CD14-positive monocyte (primary cell): ENCODE measurements at regions of chr1 and their contacts with region 1.

Region 1: DNA sequence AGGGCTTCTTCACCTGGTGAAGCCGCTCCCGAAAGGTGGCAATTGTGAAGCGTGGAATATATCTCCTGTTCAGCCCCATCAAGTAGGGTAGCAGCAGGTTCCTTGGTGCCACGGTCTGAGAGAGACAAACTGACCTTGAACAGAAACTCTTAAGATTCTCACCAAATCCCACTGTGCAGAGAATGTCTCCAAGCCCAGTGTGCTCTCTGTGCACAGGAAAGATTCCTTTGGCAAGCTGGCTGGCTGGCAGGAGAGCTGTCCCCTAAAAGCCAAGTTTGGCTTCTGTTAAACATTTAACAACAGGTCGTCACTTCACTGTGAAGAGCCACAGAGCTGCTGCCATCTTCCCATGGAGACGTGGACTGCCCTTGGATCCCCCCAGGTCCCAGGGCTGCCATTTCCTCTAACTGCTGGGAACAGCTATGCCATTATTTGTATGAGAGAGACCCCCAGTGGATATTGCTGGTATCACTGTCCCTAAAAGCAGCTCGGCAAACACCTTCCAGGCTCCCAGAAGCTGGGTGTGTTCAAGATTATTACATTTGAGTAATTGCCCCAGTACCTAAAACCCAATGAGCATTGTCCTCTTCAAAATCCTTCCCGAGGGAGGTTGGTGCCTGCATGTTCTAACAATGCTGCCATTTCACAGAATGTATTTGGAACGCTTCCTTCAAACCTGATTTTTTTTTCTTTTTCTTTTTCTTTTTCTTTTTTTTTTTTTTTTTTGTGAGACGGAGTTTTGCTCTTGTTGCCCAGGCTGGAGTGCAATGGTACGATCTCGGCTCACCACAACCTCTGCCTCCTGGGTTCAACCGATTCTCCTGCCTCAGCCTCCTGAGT is 71.8 kb downstream of the CD58 start:
- DNase-seq: peak; percentile 68 to 79 (median 75)
- H3K4me3 ChIP-seq: no peak overlapping the region
- H3K4me3 Mint-ChIP-seq: no peak overlapping the region
- H3K27ac ChIP-seq: no peak overlapping the region
- H3K27ac Mint-ChIP-seq: peak overlapping the region in 6 of 7 donors; percentile 49 to 95 (median 76)
- H3K4me1 ChIP-seq: peaks cover 67 to 73% of the 10 kb centered on the region in 2 donors
- H3K4me1 Mint-ChIP-seq: peaks cover 72% of the 10 kb centered on the region
- H3K27me3 ChIP-seq: no peaks in the 10 kb centered on the region
- H3K27me3 Mint-ChIP-seq: peaks cover 0 to 2% (median 0%) of the 10 kb centered on the region in 3 donors
- CTCF ChIP-seq: peak; percentile 89

Region 2: DNA sequence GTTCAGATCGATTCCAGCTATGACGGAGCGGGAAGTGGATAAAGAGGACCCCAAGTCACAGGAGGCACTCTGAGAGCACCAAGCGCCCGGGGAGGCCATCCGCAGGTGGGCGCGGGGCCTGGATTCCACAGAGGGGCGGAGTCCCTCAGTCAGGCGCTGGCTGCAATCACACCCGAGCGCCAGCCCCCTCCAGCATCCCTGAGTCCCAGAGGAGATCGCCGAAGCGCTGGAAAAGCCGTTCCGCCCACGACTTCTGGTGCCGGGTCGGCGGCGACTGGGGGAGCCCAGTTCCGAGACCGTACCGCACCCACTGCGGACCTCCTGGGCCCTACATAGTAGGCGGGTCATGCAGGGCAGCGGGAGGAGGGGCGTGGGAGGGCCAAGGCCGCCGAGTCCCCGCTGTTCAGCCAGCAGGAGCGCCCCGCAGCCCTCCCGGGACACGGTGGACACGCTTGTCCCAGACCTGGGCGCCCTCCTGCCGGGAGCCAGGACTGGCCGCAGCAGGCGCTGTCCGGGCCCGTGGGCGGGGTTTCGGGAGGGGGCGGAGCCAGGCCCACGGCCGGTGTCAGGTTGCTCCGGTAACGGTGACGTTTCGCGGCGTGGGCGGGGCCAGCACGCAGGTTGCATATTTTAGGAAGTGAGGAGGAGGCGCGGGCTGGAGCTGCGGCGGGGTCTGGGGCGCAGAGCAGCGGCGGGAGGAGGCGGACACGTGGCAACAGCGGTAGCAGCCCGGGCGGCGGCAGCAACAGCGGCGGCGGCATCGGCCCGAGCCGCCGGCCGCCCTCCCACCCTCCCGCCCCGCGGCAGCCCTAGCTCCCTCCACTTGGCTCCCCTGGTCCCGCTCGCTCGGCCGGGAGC is 126.2 kb before region 1 on chr1 and contains the start of gene ATP1A1:
- intact Hi-C with region 1: loop called in 1 of 2 experiments (anchors 10 kb)
- DNase-seq: peak; percentile 95 to 98 (median 98)
- H3K4me3 ChIP-seq: peak within 1 kb of the TSS; percentile 68 to 93 (median 76)
- H3K4me3 Mint-ChIP-seq: peak within 1 kb of the TSS; percentile 94 to 96
- H3K27ac ChIP-seq: peak within 1 kb of the TSS; percentile 85 to 97
- H3K27ac Mint-ChIP-seq: peak within 1 kb of the TSS; percentile 86 to 98 (median 94)
- H3K4me1 ChIP-seq: peaks cover 52 to 55% of the 10 kb centered on the region in 2 donors
- H3K4me1 Mint-ChIP-seq: peaks cover 49% of the 10 kb centered on the region
- H3K27me3 ChIP-seq: no peaks in the 10 kb centered on the region
- H3K27me3 Mint-ChIP-seq: peaks cover 5 to 11% (median 5%) of the 10 kb centered on the region in 3 donors
- CTCF ChIP-seq: no peak
- polyA plus RNA-seq, gene ATP1A1: 32.3 to 135 (median 32.7) TPM